Motor neuron (in vitro differentiated cells): ENCODE measurements at regions of chr10 and their contacts with region 1.

Region 1: DNA sequence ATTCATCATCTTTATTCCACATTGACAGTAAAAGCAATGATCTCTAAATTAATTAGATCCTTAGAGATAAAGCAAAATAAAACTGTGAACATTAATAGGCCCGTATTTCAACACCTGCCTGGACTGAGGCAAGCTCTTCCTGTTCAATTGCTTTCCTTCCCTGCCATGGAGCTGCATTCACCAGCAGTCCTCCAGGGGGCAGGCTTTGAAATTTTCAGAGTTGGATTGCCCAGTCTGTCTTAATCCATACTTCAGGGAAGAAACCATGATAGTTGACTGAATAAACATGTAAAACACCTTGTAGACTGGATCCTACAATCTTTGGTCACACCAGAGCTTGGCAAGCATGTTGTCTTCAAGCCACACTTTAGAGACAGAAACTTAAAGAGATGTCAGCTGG is 936.6 kb downstream of the NRG3 start:
- ATAC-seq: peak in 2 of 8 experiments; percentile 22 to 53
- H3K4me3 ChIP-seq: no peak overlapping the region
- H3K27ac ChIP-seq: no peak overlapping the region
- H3K4me1 ChIP-seq: no peaks in the 10 kb centered on the region

Region 2: GRCh38 chr10:82591420-82591819 is 220.2 kb before region 1 on chr10:
- in situ Hi-C with region 1: no loop called
- ATAC-seq: no peak
- H3K4me3 ChIP-seq: no peak overlapping the region
- H3K27ac ChIP-seq: no peak overlapping the region
- H3K4me1 ChIP-seq: no peaks in the 10 kb centered on the region

Region 3: GRCh38 chr10:82969405-82969804 is 157.8 kb after region 1 on chr10:
- in situ Hi-C with region 1: loop called in 1 of 9 experiments (anchors 25 kb)
- ATAC-seq: no peak
- H3K4me3 ChIP-seq: no peak overlapping the region
- H3K27ac ChIP-seq: no peak overlapping the region
- H3K4me1 ChIP-seq: no peaks in the 10 kb centered on the region

Region 4: DNA sequence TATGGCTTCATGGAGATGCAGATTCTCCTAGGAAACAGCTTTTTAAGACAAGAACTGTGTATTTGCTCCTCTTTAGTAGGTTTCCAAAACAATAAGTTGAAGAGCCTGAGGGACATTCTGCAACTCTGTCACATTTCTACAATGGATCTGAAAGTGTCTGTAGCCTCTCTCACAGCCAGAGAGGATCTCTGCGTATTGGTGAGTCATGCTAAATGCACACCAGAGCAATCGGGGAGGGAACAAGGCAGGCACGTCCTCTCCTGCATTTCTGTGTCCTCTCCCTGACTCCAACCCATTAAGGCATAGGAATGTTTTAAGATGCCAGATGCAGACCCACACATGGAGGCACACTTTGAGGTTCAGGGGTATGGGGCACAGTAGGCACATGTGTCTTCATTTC is 201.2 kb after region 1 on chr10:
- in situ Hi-C with region 1: no loop called
- ATAC-seq: peak; percentile 44 to 98 (median 69)
- H3K4me3 ChIP-seq: no peak overlapping the region
- H3K27ac ChIP-seq: no peak overlapping the region
- H3K4me1 ChIP-seq: peaks cover 0 to 26% of the 10 kb centered on the region in 2 donors

Region 5: DNA sequence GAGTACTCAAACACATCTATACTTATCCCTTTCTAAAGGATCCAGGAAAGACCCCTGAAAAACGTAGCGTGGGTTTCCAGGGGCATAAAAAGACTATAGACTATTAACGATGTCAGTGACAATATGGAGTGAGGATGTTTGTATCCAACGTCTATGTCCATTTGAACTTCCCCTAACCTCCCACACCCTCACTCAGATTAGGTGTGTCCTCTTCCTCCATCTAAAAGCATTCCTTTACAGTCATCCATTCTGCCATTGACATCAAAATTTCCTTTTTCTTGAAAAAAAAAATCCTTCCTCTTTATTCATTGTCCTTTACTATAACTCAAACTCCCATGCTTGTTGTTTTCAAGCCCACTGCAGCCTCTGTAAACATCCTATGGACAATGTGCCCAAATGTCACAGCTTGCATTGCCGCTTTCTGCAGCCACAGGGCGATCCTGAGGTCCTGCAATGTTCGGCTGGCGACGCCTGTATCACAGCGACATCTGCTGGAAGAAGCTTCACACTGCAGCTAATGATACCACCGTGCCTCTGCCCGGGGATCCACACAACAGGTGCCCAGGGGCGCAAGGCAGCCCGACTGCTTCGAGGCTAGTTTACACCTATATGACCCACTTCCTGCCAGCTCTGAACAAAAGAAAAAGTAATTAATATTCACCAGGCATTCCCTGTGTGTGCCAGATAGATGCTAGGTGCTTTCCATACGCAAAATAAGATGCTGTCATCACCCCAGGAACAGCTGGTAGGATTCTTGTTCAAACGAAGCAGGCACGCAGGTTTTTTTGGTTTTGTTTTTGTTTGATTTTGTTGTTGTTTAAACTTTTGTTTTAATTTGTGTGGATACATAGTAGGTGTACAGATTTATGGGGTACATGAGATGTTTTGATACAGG is 1059.8 kb after region 1 on chr10:
- in situ Hi-C with region 1: loop called in 1 of 9 experiments (anchors 25 kb)
- ATAC-seq: peak; percentile 87 to 99 (median 94)
- H3K4me3 ChIP-seq: no peak overlapping the region
- H3K27ac ChIP-seq: no peak overlapping the region
- H3K4me1 ChIP-seq: peaks cover 0 to 15% of the 10 kb centered on the region in 2 donors